Panc1 (cell line): ENCODE measurements at regions of chr22 and their contacts with region 1.

Region 1: DNA sequence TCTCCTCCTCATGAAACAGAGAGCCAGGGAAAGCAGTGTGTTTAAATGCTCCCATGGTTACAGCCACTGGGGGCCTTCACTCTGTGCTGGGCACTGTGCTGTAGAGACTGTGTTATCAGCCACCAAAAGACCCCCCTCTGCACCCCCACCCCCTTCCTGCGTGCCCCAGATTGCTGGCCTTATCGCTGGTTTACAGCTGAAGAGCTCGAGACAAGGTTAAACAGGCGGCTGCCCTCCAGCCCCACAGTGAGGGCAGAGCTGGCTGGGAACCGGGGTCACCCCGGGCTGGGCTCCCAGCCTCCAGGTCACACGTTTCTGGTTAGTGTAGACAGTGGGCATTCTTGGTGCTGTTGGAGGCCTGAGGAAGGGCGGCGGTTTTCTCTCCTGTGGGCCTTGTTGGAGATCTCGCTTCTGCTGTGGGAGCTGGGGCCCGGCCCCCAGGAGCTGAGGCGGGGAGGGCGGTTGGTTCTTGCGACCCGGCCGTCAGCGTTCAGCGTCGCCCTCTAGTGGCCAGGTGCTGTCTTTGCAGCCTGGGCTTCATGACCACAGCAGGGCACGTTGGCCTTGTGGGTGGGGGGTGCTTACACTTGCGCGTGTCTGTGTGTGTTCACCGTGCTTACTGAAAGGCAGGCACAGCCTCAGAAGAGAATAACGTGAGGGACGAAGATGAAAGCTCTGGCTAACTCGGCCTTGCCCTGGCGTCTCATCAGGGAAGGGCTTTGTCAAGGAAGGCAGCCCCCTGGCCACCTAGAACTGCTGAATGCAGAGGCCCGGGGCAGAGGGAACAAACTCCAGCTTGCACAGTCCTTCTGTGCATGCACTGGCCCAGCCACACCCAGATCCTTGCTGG is 40.8 kb downstream of the TBC1D22A start:
- DNase-seq: peak; percentile 42
- ATAC-seq: peak; percentile 80
- H3K4me3 ChIP-seq: no peak overlapping the region
- H3K27ac ChIP-seq: no peak overlapping the region
- H3K4me1 ChIP-seq: peaks cover 10% of the 10 kb centered on the region
- H3K27me3 ChIP-seq: no peaks in the 10 kb centered on the region
- CTCF ChIP-seq: peak; percentile 95

Region 2: DNA sequence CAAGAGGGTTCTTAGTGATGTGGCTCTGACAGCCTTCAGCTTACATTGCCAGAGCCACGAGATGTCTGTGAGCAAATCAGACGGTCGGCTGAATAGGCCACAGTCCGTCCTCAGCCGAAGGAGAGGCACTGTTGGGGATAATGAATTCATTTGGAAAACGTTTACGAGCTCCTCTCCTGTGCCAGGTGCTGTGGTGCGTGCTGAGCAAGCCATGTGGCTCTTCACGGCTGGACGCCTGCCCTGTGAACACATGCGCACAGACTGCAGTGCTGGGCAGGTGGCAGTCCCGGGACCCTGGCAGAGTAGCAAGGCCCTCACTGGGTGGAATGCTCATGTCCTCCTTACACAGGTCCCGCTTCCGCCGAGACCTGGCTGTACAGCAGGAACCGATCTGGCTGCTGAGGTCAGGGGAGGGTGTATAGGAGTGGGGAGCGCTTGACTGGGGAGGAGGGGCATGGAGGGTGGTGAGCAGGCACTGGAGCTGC is 34.0 kb before region 1 on chr22:
- CTCF ChIA-PET with region 1: interaction called, 4 read pairs
- POLR2A ChIA-PET with region 1: interaction called, 11 read pairs
- in situ Hi-C with region 1: no loop called
- intact Hi-C with region 1: no loop called
- DNase-seq: no peak
- ATAC-seq: no peak
- H3K4me3 ChIP-seq: no peak overlapping the region
- H3K27ac ChIP-seq: peak overlapping the region; percentile 23; the same call in 1 of the 2 replicates
- H3K4me1 ChIP-seq: peaks cover 26% of the 10 kb centered on the region
- H3K27me3 ChIP-seq: no peaks in the 10 kb centered on the region
- CTCF ChIP-seq: no peak

Region 3: GRCh38 chr22:47036352-47036751 is 233.1 kb after region 1 on chr22:
- CTCF ChIA-PET with region 1: interaction called, 12 read pairs
- POLR2A ChIA-PET with region 1: no interaction called
- in situ Hi-C with region 1: no loop called
- intact Hi-C with region 1: no loop called
- DNase-seq: no peak
- ATAC-seq: no peak
- H3K4me3 ChIP-seq: no peak overlapping the region
- H3K27ac ChIP-seq: no peak overlapping the region
- H3K4me1 ChIP-seq: no peaks in the 10 kb centered on the region
- H3K27me3 ChIP-seq: no peaks in the 10 kb centered on the region
- CTCF ChIP-seq: no peak